Gastrocnemius medialis (tissue), 4 donors: ENCODE measurements at regions of chr4 and their contacts with region 1.

Region 1: GRCh38 chr4:41538017-41538733 is at the start of gene LIMCH1:
- DNase-seq: peak; percentile 78 to 87
- ATAC-seq: peak; percentile 72 to 73
- H3K4me3 ChIP-seq: peak within 1 kb of the TSS; percentile 48 to 52 (median 49)
- H3K27ac ChIP-seq: peak within 1 kb of the TSS; percentile 85 to 94 (median 91)
- H3K4me1 ChIP-seq: peaks cover 58 to 68% of the 10 kb centered on the region in 2 donors
- H3K27me3 ChIP-seq: no peaks in the 10 kb centered on the region
- CTCF ChIP-seq: peak in 1 of 5 experiments; percentile 7
- POLR2A ChIP-seq: peak; percentile 28 to 38
- total RNA-seq, gene LIMCH1: 36.2 to 71.4 (median 52.1) TPM

Region 2: GRCh38 chr4:41418444-41418843 is 119.7 kb before region 1 on chr4:
- in situ Hi-C with region 1: no loop called
- intact Hi-C with region 1: loop called (anchors 1 kb)
- DNase-seq: peak; percentile 75 to 88
- ATAC-seq: peak; percentile 87 to 91
- H3K4me3 ChIP-seq: peak overlapping the region in 2 of 4 donors; percentile 13 to 17
- H3K27ac ChIP-seq: peak overlapping the region; percentile 57 to 79 (median 74)
- H3K4me1 ChIP-seq: peaks cover 36 to 38% of the 10 kb centered on the region in 2 donors
- H3K27me3 ChIP-seq: no peaks in the 10 kb centered on the region
- CTCF ChIP-seq: no peak
- POLR2A ChIP-seq: no peak

Region 3: GRCh38 chr4:41432881-41433280 is 105.3 kb before region 1 on chr4:
- in situ Hi-C with region 1: no loop called
- intact Hi-C with region 1: no loop called
- DNase-seq: no peak
- ATAC-seq: no peak
- H3K4me3 ChIP-seq: no peak overlapping the region
- H3K27ac ChIP-seq: no peak overlapping the region
- H3K4me1 ChIP-seq: peaks cover 78% of the 10 kb centered on the region in 2 donors
- H3K27me3 ChIP-seq: no peaks in the 10 kb centered on the region
- CTCF ChIP-seq: no peak
- POLR2A ChIP-seq: no peak

Region 4: GRCh38 chr4:41569961-41570360 is 31.8 kb after region 1 on chr4:
- in situ Hi-C with region 1: no loop called
- intact Hi-C with region 1: loop called (anchors 1 kb)
- DNase-seq: peak; percentile 43 to 75
- ATAC-seq: peak; percentile 62 to 89
- H3K4me3 ChIP-seq: no peak overlapping the region
- H3K27ac ChIP-seq: peak overlapping the region; percentile 75 to 87 (median 82)
- H3K4me1 ChIP-seq: peaks cover 78 to 80% of the 10 kb centered on the region in 2 donors
- H3K27me3 ChIP-seq: no peaks in the 10 kb centered on the region
- CTCF ChIP-seq: peak in 2 of 5 experiments; percentile 13 to 26
- POLR2A ChIP-seq: no peak

Region 5: GRCh38 chr4:41644288-41644914 is 106.2 kb after region 1 on chr4:
- in situ Hi-C with region 1: no loop called
- intact Hi-C with region 1: loop called (anchors 5 kb)
- DNase-seq: peak; percentile 43 to 71
- ATAC-seq: peak; percentile 92 to 93
- H3K4me3 ChIP-seq: peak overlapping the region in 3 of 4 donors; percentile 32 to 47 (median 37)
- H3K27ac ChIP-seq: peak overlapping the region; percentile 3 to 74 (median 36)
- H3K4me1 ChIP-seq: peaks cover 3 to 18% of the 10 kb centered on the region in 2 donors
- H3K27me3 ChIP-seq: no peaks in the 10 kb centered on the region
- CTCF ChIP-seq: peak; percentile 77 to 92 (median 88)
- POLR2A ChIP-seq: no peak

Region 6: DNA sequence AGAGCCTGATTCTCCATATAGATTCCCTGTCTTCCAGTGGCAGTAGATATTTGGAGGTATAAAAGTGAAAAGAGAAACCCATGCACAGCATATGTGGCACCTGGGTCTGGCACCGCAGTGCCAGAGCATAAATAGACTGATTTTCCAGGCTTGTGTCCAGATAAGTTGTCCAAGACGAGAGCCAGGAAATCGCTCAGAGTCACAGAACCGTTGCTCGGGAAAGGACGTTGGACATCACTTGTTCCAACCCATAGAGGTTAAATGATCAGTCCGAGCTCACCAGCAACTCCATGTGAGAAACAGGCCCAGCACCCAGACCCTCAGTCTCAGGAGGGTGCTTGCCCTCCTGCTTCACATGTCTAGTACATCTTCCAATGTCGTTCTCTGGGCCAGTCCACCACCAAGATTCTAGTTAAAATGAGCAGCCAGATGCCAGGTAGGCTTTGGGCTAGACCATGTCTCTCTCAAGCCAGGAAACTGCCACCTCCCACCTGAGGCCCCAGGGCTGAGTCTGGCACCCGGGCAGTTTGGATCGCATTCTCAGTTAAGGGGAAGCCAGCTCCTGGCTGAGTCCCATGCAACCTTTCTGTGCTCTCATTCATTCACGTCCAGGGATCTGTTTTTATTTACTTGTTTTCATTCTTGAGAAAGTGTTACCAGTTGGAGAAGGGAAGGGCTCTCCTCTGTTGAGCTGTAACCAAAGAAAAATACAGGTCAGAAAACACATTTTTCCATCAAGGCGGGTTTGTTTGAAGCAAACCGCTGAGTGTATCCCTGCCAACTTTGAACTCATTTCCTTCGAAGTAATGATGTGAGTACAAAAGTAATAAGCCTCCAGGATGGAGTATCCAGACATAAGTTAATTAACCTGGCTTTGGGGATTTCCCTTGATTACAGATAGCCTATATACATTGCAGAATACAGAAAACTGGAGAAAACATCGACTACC is 118.7 kb after region 1 on chr4:
- in situ Hi-C with region 1: no loop called
- intact Hi-C with region 1: no loop called
- DNase-seq: peak; percentile 14 to 69
- ATAC-seq: peak; percentile 91 to 97
- H3K4me3 ChIP-seq: no peak overlapping the region
- H3K27ac ChIP-seq: peak overlapping the region; percentile 50 to 76 (median 70)
- H3K4me1 ChIP-seq: peaks cover 25 to 34% of the 10 kb centered on the region in 2 donors
- H3K27me3 ChIP-seq: no peaks in the 10 kb centered on the region
- CTCF ChIP-seq: no peak
- POLR2A ChIP-seq: no peak

Region 7: DNA sequence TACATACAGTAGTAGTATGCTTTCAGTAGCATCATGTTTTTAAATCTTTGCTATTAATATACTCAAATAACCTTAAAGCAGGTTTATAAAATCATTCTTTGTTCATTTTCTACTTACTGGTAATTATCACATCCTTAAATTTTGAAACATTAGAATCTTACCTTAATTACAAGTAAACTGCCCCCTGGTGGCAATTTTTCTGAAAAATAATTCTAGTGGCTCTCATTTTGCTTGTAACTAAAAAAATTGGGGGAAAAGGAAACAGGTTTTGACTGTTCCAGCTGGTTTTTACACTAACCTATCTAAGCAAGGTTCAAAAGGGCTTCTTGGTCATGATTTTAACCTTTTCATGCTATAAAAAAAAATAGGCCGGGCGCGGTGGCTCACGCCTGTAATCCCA is 424.9 kb after region 1 on chr4:
- in situ Hi-C with region 1: no loop called
- intact Hi-C with region 1: no loop called
- DNase-seq: no peak
- ATAC-seq: no peak
- H3K4me3 ChIP-seq: no peak overlapping the region
- H3K27ac ChIP-seq: no peak overlapping the region
- H3K4me1 ChIP-seq: no peaks in the 10 kb centered on the region
- H3K27me3 ChIP-seq: no peaks in the 10 kb centered on the region
- CTCF ChIP-seq: no peak
- POLR2A ChIP-seq: no peak